Brain microvascular endothelial cell (primary cell): ENCODE measurements at regions of chr13 and their contacts with region 1.

Region 1: GRCh38 chr13:110116072-110116487 is 190.9 kb downstream of the COL4A1 start:
- DNase-seq: no peak
- H3K4me3 ChIP-seq: no peak overlapping the region
- H3K27ac ChIP-seq: no peak overlapping the region
- H3K27me3 ChIP-seq: no peaks in the 10 kb centered on the region
- CTCF ChIP-seq: peak; percentile 95

Region 2: GRCh38 chr13:108961542-108962125 is 1154.4 kb before region 1 on chr13:
- in situ Hi-C with region 1: loop called (anchors 25 kb)
- DNase-seq: no peak
- H3K4me3 ChIP-seq: no peak overlapping the region
- H3K27ac ChIP-seq: no peak overlapping the region
- H3K27me3 ChIP-seq: no peaks in the 10 kb centered on the region
- CTCF ChIP-seq: peak; percentile 65

Region 3: GRCh38 chr13:109162248-109163053 is 953.6 kb before region 1 on chr13:
- in situ Hi-C with region 1: loop called (anchors 25 kb)
- DNase-seq: no peak
- H3K4me3 ChIP-seq: no peak overlapping the region
- H3K27ac ChIP-seq: no peak overlapping the region
- H3K27me3 ChIP-seq: no peaks in the 10 kb centered on the region
- CTCF ChIP-seq: no peak

Region 4: DNA sequence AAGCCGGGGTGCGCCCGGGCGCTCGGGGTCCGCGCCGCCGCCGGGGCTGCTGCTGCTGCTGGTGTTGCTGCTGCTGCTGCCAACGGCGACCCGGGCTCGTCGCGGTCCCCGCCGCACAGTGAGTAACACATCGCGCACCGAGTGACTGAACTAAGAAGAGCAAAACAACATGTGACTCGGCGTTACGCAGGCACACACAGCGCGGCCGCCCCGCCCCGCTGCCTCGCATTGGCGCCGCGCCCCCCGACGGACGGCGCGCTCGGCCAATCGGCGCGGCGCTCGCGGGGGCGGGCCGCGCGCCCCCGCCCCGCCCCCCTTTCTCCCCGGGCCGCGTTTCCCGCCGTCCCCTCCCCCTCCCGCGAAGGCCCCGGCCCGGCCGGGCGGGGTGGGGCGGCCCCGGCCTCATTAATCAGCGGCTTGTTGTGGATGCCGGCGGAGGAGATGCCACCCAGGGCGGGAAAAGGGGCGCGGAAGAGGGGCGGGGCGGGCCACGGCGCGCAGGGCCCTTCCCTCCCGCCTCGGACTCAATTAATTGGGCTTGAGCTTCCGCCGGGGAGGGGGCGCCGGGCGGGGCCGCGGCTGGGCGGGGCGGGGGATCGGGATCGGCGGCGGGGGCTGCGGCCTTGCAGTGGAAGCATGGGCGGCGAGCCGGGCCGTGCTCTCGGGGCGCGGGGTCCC is 329.5 kb before region 1 on chr13 and contains the start of gene IRS2:
- in situ Hi-C with region 1: loop called (anchors 25 kb)
- DNase-seq: peak; percentile 87
- H3K4me3 ChIP-seq: peak within 1 kb of the TSS; percentile 69
- H3K27ac ChIP-seq: peak within 1 kb of the TSS; percentile 78
- H3K27me3 ChIP-seq: no peaks in the 10 kb centered on the region
- CTCF ChIP-seq: no peak

Region 5: DNA sequence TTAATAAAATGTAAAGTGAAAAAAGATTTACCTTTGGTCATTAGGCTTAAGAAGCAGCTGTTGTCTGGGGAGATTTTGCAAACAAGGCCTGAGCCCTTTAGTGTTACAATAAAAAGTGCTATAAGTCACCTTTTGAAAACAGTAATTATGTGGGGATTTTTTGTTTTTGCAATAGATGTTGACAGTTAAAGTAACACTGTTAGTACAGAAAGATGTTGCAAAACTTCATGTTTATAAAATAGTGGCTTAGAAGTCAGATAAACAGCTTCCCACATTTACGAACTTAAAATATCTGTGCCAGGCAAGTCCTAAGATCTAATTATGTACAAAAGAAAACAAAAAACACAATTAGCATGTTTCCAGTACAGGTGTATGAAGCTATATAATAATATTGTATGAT is 191.7 kb before region 1 on chr13:
- in situ Hi-C with region 1: no loop called
- DNase-seq: no peak
- H3K4me3 ChIP-seq: no peak overlapping the region
- H3K27ac ChIP-seq: no peak overlapping the region
- H3K27me3 ChIP-seq: no peaks in the 10 kb centered on the region
- CTCF ChIP-seq: no peak